ENCODE measurements at regions of chr20 and their contacts with region 1.

Region 1: DNA sequence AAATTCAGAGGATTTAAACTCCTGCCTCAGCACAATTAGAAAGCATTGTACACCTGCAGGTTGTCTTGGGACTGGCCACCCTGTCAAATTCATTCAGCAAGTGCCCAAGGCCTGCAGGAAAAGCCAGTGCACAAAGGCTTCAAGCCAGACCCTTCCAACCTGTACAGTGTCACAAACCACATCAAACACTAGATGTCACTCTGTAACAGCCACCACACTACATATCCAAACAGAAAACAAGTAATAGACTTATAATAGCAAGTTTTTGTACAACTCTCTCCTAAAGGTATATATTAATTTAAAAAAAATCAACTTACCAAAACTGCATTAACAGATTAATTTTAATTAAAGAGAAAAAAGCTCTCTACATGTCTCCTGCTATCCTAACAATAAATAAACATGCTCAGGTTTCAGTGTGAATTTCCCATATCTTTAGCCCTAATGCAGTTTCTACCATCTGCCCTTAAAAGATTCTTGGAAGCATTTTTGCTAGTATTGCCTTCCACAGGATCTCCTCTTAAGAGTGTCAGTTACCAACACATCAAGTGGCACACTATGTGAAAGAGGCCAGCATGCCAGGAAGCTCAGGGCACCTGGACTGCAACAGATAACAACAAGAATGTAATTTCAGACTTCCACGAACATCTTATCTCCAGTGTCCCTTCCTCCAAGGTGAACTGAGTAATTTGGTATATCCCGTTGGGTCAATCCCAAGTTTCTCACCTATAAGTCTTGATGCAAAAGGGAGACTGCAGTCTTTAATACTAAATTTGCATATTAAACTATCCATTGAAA is 47.5 kb downstream of the RALGAPA2 start:
- DNase-seq: peak; percentile 29
- ATAC-seq: no peak
- H3K4me3 ChIP-seq: no peak overlapping the region
- H3K4me3 Mint-ChIP-seq: no peak overlapping the region
- H3K27ac ChIP-seq: no peak overlapping the region
- H3K27ac Mint-ChIP-seq: no peak overlapping the region
- H3K4me1 ChIP-seq: peaks cover 23 to 26% of the 10 kb centered on the region in 2 donors
- H3K4me1 Mint-ChIP-seq: peaks cover 30% of the 10 kb centered on the region
- H3K27me3 ChIP-seq: no peaks in the 10 kb centered on the region
- H3K27me3 Mint-ChIP-seq: no peaks in the 10 kb centered on the region
- CTCF ChIP-seq: peak; percentile 43

Region 2: DNA sequence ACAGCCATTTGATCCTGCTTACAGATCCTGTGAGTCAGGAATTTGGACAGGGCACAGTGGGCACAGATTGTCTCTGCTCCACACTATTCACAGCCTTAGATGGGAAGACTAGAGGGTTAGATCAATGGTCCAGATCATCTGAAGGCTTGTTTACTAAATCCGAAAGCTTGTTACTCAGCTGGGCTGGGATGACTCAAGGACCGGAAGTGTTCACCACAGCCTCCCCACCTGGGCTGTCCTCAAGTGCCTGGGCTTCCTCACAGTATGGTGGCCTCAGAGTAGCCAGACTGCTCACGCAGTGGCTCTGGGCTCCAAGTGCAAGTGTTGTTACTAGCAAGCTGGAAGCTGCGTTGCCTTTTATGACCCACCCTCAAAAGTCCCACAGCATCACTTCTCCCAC is 372.5 kb before region 1 on chr20:
- CTCF ChIA-PET with region 1: no interaction called
- POLR2A ChIA-PET with region 1: no interaction called
- intact Hi-C with region 1: no loop called
- DNase-seq: no peak
- ATAC-seq: no peak
- H3K4me3 ChIP-seq: no peak overlapping the region
- H3K4me3 Mint-ChIP-seq: no peak overlapping the region
- H3K27ac ChIP-seq: no peak overlapping the region
- H3K27ac Mint-ChIP-seq: no peak overlapping the region
- H3K4me1 ChIP-seq: no peaks in the 10 kb centered on the region
- H3K4me1 Mint-ChIP-seq: no peaks in the 10 kb centered on the region
- H3K27me3 ChIP-seq: peaks cover 0 to 2% (median 0%) of the 10 kb centered on the region in 4 experiments
- H3K27me3 Mint-ChIP-seq: peaks cover 19% of the 10 kb centered on the region
- CTCF ChIP-seq: no peak

Region 3: GRCh38 chr20:20593447-20594170 is 71.4 kb before region 1 on chr20:
- CTCF ChIA-PET with region 1: no interaction called
- POLR2A ChIA-PET with region 1: no interaction called
- intact Hi-C with region 1: no loop called
- DNase-seq: peak; percentile 25
- ATAC-seq: no peak
- H3K4me3 ChIP-seq: no peak overlapping the region
- H3K4me3 Mint-ChIP-seq: no peak overlapping the region
- H3K27ac ChIP-seq: no peak overlapping the region
- H3K27ac Mint-ChIP-seq: no peak overlapping the region
- H3K4me1 ChIP-seq: no peaks in the 10 kb centered on the region
- H3K4me1 Mint-ChIP-seq: no peaks in the 10 kb centered on the region
- H3K27me3 ChIP-seq: no peaks in the 10 kb centered on the region
- H3K27me3 Mint-ChIP-seq: no peaks in the 10 kb centered on the region
- CTCF ChIP-seq: peak; percentile 24

Region 4: DNA sequence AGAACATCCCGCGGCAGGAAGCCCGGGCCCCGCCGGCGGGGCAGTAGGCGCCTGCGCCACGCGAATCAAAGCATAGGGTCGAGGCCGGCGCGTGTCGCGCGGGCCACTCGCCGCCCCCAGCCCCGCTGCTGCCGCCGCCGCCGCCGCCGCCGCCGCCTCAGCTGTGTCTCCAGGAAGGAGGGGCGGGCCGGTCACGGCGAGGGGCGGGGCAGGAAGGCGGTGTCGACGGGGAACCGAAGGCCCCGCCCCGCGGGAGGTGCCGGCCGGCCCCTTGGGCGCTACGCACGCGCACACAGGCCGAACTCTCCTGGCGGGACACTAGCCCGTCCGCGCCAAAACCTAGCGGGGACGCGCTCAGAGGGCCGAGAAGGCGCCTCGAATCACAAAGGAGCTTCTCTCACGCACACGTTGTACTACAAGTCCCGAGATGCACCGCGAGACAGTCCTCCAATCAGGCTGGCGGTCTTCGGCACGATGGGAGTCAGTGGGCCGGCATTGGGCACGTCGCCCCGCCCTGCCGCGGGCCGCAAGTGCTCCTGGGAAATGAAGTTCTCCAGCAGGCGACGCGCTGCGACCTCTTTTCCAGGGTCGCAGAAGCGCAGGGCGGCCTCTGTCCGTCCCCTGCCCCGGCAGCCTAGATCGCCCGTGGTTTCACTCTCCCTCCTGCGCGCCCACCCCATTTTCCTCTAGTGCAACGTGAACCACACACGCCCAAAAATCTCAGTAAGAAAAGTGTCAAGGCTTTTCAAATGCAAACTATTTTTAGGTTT is 47.7 kb after region 1 on chr20 and contains the start of gene RALGAPA2:
- CTCF ChIA-PET with region 1: no interaction called
- POLR2A ChIA-PET with region 1: interaction called, 3 read pairs
- intact Hi-C with region 1: loop called (anchors 10 kb)
- DNase-seq: peak; percentile 97
- ATAC-seq: peak; percentile 95
- H3K4me3 ChIP-seq: peak within 1 kb of the TSS; percentile 78 to 96 (median 91)
- H3K4me3 Mint-ChIP-seq: peak within 1 kb of the TSS; percentile 95
- H3K27ac ChIP-seq: peak within 1 kb of the TSS; percentile 90 to 96
- H3K27ac Mint-ChIP-seq: peak within 1 kb of the TSS; percentile 97
- H3K4me1 ChIP-seq: peaks cover 19 to 20% of the 10 kb centered on the region in 2 donors
- H3K4me1 Mint-ChIP-seq: peaks cover 25% of the 10 kb centered on the region
- H3K27me3 ChIP-seq: peaks cover 0 to 3% (median 0%) of the 10 kb centered on the region in 4 experiments
- H3K27me3 Mint-ChIP-seq: no peaks in the 10 kb centered on the region
- CTCF ChIP-seq: no peak
- total RNA-seq, gene RALGAPA2: 32.2 and 33.1 TPM in 2 replicates

Region 5: GRCh38 chr20:20824924-20825584 is 160.1 kb after region 1 on chr20:
- CTCF ChIA-PET with region 1: interaction called, 29 read pairs
- POLR2A ChIA-PET with region 1: no interaction called
- intact Hi-C with region 1: no loop called
- DNase-seq: peak; percentile 61
- ATAC-seq: peak; percentile 45
- H3K4me3 ChIP-seq: no peak overlapping the region
- H3K4me3 Mint-ChIP-seq: no peak overlapping the region
- H3K27ac ChIP-seq: no peak overlapping the region
- H3K27ac Mint-ChIP-seq: no peak overlapping the region
- H3K4me1 ChIP-seq: peaks cover 0 to 4% of the 10 kb centered on the region in 2 donors
- H3K4me1 Mint-ChIP-seq: peaks cover 5% of the 10 kb centered on the region
- H3K27me3 ChIP-seq: no peaks in the 10 kb centered on the region
- H3K27me3 Mint-ChIP-seq: peaks cover 34% of the 10 kb centered on the region
- CTCF ChIP-seq: peak; percentile 82